Aorta (tissue), 5 donors: ENCODE measurements at regions of chr3 and their contacts with region 1.

Region 1: GRCh38 chr3:123053106-123053505 is 13.7 kb upstream of the PDIA5 start:
- DNase-seq: peak in 1 of 2 donors; percentile 56
- ATAC-seq: peak; percentile 56
- H3K4me3 ChIP-seq: no peak overlapping the region
- H3K27ac ChIP-seq: peak overlapping the region in 1 of 2 donors; percentile 17
- H3K4me1 ChIP-seq: no peaks in the 10 kb centered on the region
- H3K27me3 ChIP-seq: no peaks in the 10 kb centered on the region

Region 2: GRCh38 chr3:123122525-123123315 is 69.6 kb after region 1 on chr3:
- intact Hi-C with region 1: loop called in 1 of 2 experiments (anchors 10 kb)
- DNase-seq: peak in 1 of 2 donors; percentile 54
- ATAC-seq: no peak
- H3K4me3 ChIP-seq: no peak overlapping the region
- H3K27ac ChIP-seq: no peak overlapping the region
- H3K4me1 ChIP-seq: no peaks in the 10 kb centered on the region
- H3K27me3 ChIP-seq: no peaks in the 10 kb centered on the region